ENCODE measurements at regions of chr11 and their contacts with region 1.

Region 1: GRCh38 chr11:15327786-15328231 is 213.1 kb downstream of the INSC start:
- DNase-seq: peak; percentile 58 to 65 (median 62)
- ATAC-seq: peak; percentile 91
- H3K4me3 ChIP-seq: no peak overlapping the region
- H3K27ac ChIP-seq: no peak overlapping the region
- H3K4me1 ChIP-seq: no peaks in the 10 kb centered on the region
- H3K27me3 ChIP-seq: no peaks in the 10 kb centered on the region; a peak in 1 of 5 replicates
- CTCF ChIP-seq: peak; percentile 63 to 71 (median 70)
- EP300 ChIP-seq: no peak
- POLR2A ChIP-seq: no peak
- RAD21 ChIP-seq: peak; percentile 35 to 68

Region 2: DNA sequence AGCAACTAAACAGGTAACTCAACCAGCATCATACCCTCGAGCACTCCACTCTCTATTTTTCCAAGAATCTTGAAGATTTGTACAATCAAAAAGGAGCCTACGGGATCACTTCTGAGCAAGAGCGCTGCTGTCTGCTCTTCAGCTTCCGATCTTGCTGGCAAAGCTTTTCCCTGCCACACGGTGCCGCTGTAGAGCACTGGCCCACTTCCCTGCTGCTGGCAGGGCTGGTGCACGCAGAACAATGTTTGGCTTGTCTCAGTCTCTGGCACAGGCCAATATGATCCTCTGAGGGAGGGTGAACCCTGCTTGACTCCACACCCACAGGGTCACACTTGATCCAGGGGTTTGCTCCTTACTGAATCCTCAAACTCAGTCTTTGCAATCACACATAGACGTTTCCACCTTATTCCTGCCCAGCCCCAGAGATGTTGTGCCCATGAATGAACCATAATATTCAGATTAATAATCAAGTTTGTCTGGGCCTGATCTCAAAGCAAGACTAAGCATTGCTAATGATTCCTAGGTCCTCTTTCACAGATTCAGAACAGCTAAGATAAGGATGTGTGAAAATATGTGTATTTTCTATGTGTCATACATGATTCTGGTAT is 492.0 kb after region 1 on chr11:
- CTCF ChIA-PET with region 1: no interaction called
- POLR2A ChIA-PET with region 1: no interaction called
- in situ Hi-C with region 1: no loop called
- intact Hi-C with region 1: loop called (anchors 2 kb)
- DNase-seq: peak; percentile 58 to 66 (median 61)
- ATAC-seq: peak; percentile 95
- H3K4me3 ChIP-seq: no peak overlapping the region
- H3K27ac ChIP-seq: no peak overlapping the region
- H3K4me1 ChIP-seq: no peaks in the 10 kb centered on the region
- H3K27me3 ChIP-seq: peaks cover 0 to under 1% of the 10 kb centered on the region in 2 experiments; a peak in 2 of 5 replicates
- CTCF ChIP-seq: peak; percentile 77 to 91 (median 85)
- EP300 ChIP-seq: no peak
- POLR2A ChIP-seq: no peak
- RAD21 ChIP-seq: peak; percentile 37 to 68